ENCODE measurements at regions of chr11 and their contacts with region 1.

Region 1: DNA sequence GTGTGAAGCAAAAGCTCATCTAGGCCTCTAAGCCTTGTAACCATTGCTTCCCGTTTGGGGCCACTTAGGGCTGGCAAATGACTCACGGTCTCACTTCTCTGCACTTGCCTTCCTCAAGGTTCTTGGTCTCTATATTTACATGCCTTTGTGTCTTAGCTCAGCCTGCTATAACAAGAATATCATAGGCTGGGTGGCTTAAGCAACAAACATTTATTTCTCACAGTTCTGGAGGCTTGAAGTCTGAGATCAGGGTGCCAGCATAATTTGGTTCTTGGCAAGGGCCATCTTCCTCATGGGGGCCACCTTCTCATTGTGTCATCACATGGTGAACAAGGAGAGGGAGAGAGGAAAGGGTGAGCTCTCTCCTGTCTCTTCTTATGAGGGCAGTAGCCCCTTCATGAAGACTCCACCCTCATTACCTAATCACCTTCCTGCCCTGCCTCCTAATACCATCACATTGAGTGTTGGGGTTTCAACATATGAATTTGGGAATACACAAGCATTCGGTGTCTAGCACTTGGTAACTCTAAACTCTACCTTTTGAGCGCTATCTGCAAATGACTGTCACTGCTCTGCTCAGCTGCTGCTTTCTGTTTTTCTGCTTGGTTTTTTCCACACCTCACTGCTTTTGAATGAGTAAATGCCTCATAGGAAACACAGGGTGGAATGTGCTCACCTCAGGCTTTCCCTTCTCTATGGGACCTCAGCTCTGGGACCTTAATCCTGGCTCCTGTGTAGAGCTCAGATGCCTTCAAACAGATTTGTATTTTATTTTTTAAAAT is 16.2 kb upstream of the ME3 start:
- DNase-seq: peak in 5 of 7 donors; percentile 23 to 61 (median 54)
- H3K4me3 ChIP-seq: no peak overlapping the region
- H3K27ac ChIP-seq: peak overlapping the region in 4 of 5 donors; percentile 2 to 68 (median 39)
- H3K4me1 ChIP-seq: peaks cover 4 to 16% of the 10 kb centered on the region in 2 donors
- H3K27me3 ChIP-seq: no peaks in the 10 kb centered on the region
- CTCF ChIP-seq: no peak
- POLR2A ChIP-seq: no peak

Region 2: DNA sequence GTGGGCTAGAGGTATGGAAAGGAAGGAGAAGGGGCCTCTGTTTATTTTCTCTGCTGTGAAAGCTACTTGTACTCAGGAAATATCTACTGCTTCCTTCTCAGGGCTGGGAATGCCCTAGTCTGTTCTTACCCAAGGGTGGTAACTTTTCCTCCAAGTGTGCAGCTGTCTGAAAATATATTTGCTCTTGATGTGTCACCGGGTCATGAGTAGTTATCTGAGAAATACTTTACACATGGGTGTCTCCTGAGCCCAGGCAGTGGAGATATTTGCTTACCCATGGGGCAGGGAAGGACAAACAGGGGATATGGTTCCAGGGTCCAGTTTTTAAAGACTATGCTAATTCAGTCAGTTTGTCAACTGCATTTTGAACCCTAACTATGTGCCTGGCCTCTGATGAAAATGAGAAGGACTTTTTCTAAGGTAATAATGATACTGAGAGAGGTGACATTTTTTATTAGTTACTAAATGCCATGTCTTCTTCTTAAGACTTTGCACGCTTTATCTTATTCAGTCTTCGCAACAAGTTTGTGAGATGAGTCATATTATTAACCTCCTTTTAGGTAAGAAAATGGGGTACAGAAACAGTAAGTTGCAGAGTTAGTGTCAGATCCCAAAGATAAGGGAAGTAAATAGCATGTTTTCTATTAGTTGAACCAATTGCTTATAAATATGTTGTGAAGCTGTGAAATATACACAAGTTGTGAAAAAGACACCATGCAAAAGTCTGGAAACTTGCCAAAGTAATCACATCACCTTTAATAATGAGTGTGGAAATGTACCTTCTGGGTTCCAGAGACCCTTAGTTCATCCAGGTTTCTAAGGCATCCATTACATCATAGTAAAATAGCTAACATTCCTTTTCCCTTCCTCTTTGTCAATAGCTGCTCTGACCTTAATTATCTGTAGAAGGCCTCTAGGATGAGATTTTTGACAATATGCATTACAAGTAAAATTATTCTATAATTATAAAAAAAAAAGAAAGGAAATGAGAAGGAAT is 900.5 kb before region 1 on chr11:
- intact Hi-C with region 1: no loop called
- DNase-seq: no peak
- H3K4me3 ChIP-seq: no peak overlapping the region
- H3K27ac ChIP-seq: no peak overlapping the region
- H3K4me1 ChIP-seq: no peaks in the 10 kb centered on the region
- H3K27me3 ChIP-seq: no peaks in the 10 kb centered on the region
- CTCF ChIP-seq: no peak
- POLR2A ChIP-seq: no peak

Region 3: DNA sequence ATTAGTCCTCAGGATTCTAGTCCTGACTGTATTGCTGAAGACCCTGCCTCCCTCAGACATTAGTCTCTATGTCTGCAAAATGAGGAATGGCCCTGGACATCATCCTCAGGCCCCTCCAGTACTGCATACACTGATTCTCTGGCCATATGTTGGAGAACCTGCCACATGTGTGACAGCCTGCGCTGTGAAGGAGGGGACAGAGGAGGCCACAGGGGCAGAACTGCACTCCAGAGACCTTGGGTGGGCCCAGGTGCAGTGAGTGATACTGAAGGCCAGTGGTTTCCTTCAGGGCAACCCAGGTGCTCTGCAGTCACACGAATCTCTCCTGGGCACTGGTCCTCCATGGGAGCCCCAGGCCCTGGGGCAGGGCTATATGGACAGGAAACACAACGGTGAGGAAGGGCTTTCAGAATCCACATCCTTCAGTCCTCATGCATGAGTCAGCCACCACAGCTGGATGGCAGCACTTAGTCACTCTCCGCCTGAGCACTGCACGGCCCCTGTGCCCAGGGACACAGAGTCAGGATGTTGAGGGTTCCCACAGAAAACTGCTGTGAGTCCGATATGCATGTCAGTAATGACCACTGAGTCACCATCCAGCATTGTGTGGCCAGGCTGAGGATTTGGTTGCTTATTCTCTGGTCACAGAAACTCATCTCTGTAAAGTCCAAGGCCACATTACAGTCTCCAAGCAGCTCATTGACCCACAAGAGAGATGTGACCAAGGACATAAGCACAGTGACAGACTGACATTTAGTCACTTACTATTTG is 55.9 kb before region 1 on chr11:
- intact Hi-C with region 1: loop called in 1 of 2 experiments (anchors 10 kb)
- DNase-seq: peak; percentile 73 to 91 (median 85)
- H3K4me3 ChIP-seq: no peak overlapping the region
- H3K27ac ChIP-seq: peak overlapping the region in 3 of 5 donors; percentile 47 to 79 (median 52)
- H3K4me1 ChIP-seq: peaks cover 4 to 22% of the 10 kb centered on the region in 2 donors
- H3K27me3 ChIP-seq: no peaks in the 10 kb centered on the region
- CTCF ChIP-seq: peak in 5 of 6 experiments; percentile 31 to 49 (median 43)
- POLR2A ChIP-seq: no peak

Region 4: GRCh38 chr11:86802601-86803051 is 114.0 kb after region 1 on chr11:
- intact Hi-C with region 1: no loop called
- DNase-seq: peak in 3 of 7 donors; percentile 38 to 66 (median 47)
- H3K4me3 ChIP-seq: peak overlapping the region in 1 of 4 donors; percentile 17
- H3K27ac ChIP-seq: no peak overlapping the region
- H3K4me1 ChIP-seq: peaks cover 6 to 20% of the 10 kb centered on the region in 2 donors
- H3K27me3 ChIP-seq: no peaks in the 10 kb centered on the region
- CTCF ChIP-seq: peak; percentile 30 to 71 (median 59)
- POLR2A ChIP-seq: no peak

Measured in adrenal gland (tissue), 19 donors.